Right ventricle myocardium superior (tissue), 1 donor: ENCODE measurements at regions of chr11 and their contacts with region 1.

Region 1: GRCh38 chr11:83156150-83156995 is 558 bp upstream of the PCF11 start:
- DNase-seq: peak; percentile 99
- ATAC-seq: peak; percentile 94

Region 2: GRCh38 chr11:82900277-82901164 is 255.9 kb before region 1 on chr11 and contains the start of gene PRCP:
- intact Hi-C with region 1: loop called (anchors 10 kb)
- DNase-seq: peak; percentile 95
- ATAC-seq: peak; percentile 96
- total RNA-seq, gene PRCP: 37.2 TPM

Region 3: GRCh38 chr11:82989628-82990404 is 166.6 kb before region 1 on chr11:
- intact Hi-C with region 1: loop called (anchors 5 kb)
- DNase-seq: no peak
- ATAC-seq: no peak

Region 4: GRCh38 chr11:83071567-83072349 is 84.6 kb before region 1 on chr11 and contains the start of gene RAB30:
- intact Hi-C with region 1: loop called (anchors 10 kb)
- DNase-seq: peak; percentile 94
- ATAC-seq: peak; percentile 98
- total RNA-seq, gene RAB30: 24.2 TPM

Region 5: DNA sequence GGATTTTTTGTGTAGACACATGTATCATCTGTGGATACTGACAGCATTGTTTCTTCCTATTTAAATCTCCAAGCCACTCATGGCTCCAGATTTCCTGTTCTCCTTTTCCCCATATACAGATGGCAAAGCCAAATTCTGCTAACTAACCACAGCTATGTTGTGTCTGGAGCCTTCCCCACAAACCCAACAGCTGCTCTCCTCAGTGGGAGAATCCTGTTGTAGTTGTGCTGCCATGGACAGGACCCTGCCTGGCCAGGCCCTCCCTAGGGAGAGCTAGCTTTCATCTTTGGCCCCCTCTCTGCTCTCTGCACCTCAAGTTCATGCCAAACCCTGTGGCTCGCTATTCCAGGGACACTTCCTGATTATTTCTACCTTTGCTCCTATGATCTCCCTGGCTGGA is 236.2 kb after region 1 on chr11:
- intact Hi-C with region 1: no loop called
- DNase-seq: no peak
- ATAC-seq: no peak